ENCODE measurements at regions of chr11 and their contacts with region 1.

Region 1: DNA sequence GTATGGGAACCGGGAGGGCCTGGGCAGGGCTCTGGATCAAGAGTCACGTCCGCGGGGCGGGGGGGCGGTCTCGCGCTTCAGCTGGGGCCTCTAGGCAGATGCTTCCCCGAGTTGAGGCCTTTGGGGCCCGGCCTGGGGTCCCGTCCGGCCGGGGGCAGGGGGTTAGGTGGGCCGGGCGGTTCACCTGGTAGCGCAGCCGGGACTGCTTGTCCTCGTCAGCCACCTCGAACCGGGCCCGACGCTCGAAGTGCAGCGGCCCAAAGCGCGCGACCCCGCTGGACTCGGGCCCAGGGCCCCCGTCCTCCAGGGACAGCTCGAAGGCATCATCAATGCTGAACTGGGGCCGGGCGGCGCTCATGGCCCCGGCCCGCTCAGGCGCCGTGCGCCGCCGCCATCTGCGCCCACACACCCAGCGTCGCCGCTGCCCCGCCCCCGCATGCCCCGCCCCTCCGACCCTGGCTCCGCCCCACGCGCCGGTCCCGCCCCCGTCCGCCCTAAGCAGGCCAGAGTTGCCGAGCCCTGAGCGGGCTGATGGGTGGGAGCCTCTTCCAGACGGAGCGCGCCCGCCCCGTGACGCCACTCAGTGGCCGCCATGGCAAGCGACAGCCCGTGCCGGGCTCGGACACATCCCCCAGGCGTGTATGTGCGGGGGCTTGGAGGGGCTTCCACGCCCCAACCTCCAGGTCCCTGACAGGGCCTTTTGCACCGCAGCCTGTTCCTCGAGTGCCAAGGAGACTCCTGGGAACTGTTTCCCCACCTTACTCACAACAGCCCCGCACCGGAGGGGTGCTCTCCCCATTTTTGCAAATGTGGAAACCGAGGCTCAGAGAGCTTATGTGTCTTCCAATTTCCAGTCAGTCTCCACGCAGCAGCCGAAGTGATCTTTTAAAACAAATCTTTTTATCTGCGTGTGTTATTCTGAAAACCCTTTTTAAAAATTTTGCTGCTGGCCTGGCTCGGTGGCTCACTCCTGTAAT is at the start of gene TMEM134:
- DNase-seq: peak; percentile 85 to 88 (median 88)
- H3K4me3 ChIP-seq: peak within 1 kb of the TSS; percentile 78 to 79
- H3K4me3 Mint-ChIP-seq: peak within 1 kb of the TSS; percentile 83 to 92 (median 90)
- H3K27ac ChIP-seq: peak within 1 kb of the TSS; percentile 81
- H3K27ac Mint-ChIP-seq: peak within 1 kb of the TSS; percentile 84 to 96 (median 91)
- H3K4me1 ChIP-seq: peaks cover 46% of the 10 kb centered on the region
- H3K4me1 Mint-ChIP-seq: peaks cover 16 to 36% (median 27%) of the 10 kb centered on the region in 4 donors
- H3K27me3 ChIP-seq: no peaks in the 10 kb centered on the region
- H3K27me3 Mint-ChIP-seq: no peaks in the 10 kb centered on the region
- total RNA-seq, gene TMEM134: 90.1 to 99.1 TPM

Region 2: DNA sequence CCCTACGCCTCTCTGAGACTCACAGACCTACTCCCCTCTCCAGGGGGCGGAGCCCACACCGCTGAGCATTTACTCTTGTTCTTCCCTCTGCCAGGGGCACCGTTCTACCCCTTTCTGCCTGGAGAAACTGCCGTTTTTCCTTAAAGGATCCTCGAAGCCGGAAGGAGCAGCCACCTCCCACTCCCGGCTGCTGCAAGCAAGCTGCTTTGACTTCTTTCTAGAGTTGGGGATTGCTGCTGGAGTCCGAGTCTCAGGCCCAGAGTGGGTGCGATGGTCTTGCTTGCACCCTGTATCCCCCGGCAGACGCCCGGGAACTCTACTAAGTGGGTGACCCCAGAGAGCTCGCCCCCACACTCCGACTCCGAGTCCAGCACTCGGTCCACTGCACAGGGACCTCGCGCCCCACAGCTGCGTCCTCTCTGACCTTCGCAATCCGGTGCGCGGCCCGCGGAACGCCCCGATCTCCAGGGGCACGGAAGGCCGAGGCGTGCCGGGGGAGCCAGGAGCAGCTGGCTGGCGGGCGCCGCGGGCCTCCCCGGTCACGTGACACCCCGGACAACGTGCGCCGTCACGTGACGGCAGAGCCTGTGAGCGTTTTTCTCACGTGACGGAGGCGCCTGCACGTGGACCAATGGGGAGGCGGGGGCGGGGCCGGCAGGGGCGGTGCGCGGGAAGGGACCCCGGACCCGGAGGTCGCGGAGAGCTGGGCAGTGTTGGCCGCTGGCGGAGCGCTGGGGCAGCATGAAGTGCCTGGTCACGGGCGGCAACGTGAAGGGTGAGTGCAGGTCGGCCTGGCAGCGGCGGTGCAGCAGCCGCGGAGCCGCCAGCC is 77.6 kb before region 1 on chr11 and contains the start of gene RAD9A:
- CTCF ChIA-PET with region 1: interaction called, 3 read pairs
- POLR2A ChIA-PET with region 1: interaction called, 260 read pairs
- intact Hi-C with region 1: loop called (anchors 1 kb)
- DNase-seq: peak; percentile 86 to 93 (median 89)
- H3K4me3 ChIP-seq: peak within 1 kb of the TSS; percentile 63 to 75
- H3K4me3 Mint-ChIP-seq: peak within 1 kb of the TSS; percentile 87 to 93 (median 91)
- H3K27ac ChIP-seq: peak within 1 kb of the TSS; percentile 79
- H3K27ac Mint-ChIP-seq: peak within 1 kb of the TSS; percentile 82 to 94 (median 87)
- H3K4me1 ChIP-seq: peaks cover 17% of the 10 kb centered on the region
- H3K4me1 Mint-ChIP-seq: peaks cover 23 to 46% (median 36%) of the 10 kb centered on the region in 4 donors
- H3K27me3 ChIP-seq: no peaks in the 10 kb centered on the region
- H3K27me3 Mint-ChIP-seq: no peaks in the 10 kb centered on the region
- total RNA-seq, gene RAD9A: 51.8 to 55.9 TPM

Region 3: GRCh38 chr11:67409261-67409666 is 59.9 kb before region 1 on chr11:
- CTCF ChIA-PET with region 1: interaction called, 10 read pairs
- POLR2A ChIA-PET with region 1: interaction called, 260 read pairs
- intact Hi-C with region 1: loop called (anchors 1 kb)
- DNase-seq: peak; percentile 80 to 85 (median 83)
- H3K4me3 ChIP-seq: peak overlapping the region; percentile 48 to 77
- H3K4me3 Mint-ChIP-seq: peak overlapping the region; percentile 85 to 100 (median 94)
- H3K27ac ChIP-seq: peak overlapping the region; percentile 81
- H3K27ac Mint-ChIP-seq: peak overlapping the region; percentile 37 to 98 (median 72)
- H3K4me1 ChIP-seq: peaks cover 91% of the 10 kb centered on the region
- H3K4me1 Mint-ChIP-seq: peaks cover 49 to 97% (median 67%) of the 10 kb centered on the region in 4 donors
- H3K27me3 ChIP-seq: no peaks in the 10 kb centered on the region
- H3K27me3 Mint-ChIP-seq: no peaks in the 10 kb centered on the region

Region 4: DNA sequence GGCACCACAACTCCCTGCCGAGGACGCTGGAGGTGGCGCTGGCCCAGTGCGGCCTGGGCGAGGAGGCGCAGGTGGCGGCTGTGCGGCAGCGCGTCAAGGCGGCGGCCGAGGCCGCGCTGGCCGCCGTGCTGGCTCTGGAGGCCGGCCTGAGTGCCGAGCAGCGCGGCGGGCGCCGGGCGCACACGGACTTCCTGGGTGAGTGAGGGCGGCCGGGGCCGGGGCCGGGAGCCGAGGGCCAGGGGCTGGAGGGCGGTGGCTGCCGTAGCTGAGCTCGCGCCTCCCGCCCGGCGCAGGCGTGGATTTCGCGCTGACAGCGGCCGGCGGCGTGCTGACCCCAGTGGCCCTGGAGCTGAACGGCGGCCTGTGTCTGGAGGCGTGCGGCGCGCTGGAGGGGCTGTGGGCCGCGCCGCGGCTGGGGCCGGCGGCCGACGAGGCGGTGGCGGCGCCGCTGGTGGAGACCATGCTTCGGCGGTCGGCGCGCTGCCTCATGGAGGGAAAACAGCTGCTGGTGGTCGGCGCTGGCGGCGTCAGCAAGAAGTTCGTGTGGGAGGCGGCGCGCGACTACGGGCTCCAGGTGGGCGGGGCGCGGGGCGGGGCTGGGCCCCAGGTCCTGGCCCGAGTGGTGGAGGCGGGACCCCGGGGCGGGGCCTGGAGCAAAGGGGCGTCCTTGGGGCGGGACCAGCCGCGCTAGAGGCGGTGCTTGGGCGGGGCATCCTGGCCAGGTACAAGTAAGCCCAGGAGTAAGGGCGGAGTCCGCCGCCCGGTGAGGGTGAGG is 48.3 kb before region 1 on chr11:
- CTCF ChIA-PET with region 1: interaction called, 8 read pairs
- POLR2A ChIA-PET with region 1: interaction called, 50 read pairs
- intact Hi-C with region 1: loop called (anchors 2 kb)
- DNase-seq: peak; percentile 96 to 99 (median 97)
- H3K4me3 ChIP-seq: peak overlapping the region in 1 of 2 donors; percentile 69
- H3K4me3 Mint-ChIP-seq: peak overlapping the region; percentile 67 to 87 (median 80)
- H3K27ac ChIP-seq: peak overlapping the region; percentile 66
- H3K27ac Mint-ChIP-seq: peak overlapping the region; percentile 64 to 94 (median 92)
- H3K4me1 ChIP-seq: peaks cover 53% of the 10 kb centered on the region
- H3K4me1 Mint-ChIP-seq: peaks cover 29 to 63% (median 46%) of the 10 kb centered on the region in 4 donors
- H3K27me3 ChIP-seq: no peaks in the 10 kb centered on the region
- H3K27me3 Mint-ChIP-seq: no peaks in the 10 kb centered on the region

Region 5: DNA sequence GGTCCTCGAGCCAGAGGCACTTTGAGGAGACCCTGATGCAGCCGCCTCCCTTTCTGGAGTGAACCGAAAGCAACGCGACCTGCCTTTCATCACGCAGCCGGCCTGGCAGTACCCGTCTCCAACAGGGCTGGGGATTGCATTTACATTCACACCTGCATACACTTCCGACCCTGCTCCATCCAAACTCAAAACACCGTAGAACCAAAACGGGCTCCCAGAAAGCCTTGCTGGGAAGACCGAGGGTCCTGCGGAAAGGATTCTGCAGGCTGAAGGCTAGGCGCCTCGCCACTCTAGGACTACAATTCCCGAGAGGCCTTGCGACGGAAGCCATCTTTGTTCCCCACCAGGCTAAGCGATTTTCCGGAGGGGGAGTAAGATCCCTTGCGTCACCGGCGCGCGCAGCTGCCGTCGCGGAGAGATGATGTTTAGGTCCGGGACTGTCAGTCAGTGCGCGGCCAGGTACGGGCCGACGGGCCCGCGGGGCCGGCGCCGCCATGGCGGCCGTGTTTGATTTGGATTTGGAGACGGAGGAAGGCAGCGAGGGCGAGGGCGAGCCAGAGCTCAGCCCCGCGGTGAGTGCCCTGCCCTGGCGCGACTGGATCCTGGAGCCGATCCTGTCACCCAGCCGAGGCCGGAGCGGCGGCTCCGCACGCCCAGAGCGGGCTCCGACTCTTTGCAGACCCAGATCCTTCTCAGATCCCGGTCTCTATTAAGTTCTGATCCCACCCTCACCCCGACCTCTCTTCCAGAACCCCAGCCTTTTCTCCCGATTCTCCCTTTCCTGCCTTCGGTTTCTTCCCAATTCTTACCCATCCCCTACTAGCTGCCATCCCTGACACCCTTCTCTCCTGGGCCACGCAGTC is 40.8 kb before region 1 on chr11 and contains the start of gene RPS6KB2:
- CTCF ChIA-PET with region 1: interaction called, 3 read pairs
- POLR2A ChIA-PET with region 1: interaction called, 900 read pairs
- intact Hi-C with region 1: loop called (anchors 1 kb)
- DNase-seq: peak; percentile 97 to 99 (median 98)
- H3K4me3 ChIP-seq: peak within 1 kb of the TSS; percentile 94 to 95
- H3K4me3 Mint-ChIP-seq: peak within 1 kb of the TSS; percentile 93 to 100 (median 98)
- H3K27ac ChIP-seq: peak within 1 kb of the TSS; percentile 90
- H3K27ac Mint-ChIP-seq: peak within 1 kb of the TSS; percentile 95 to 99 (median 97)
- H3K4me1 ChIP-seq: peaks cover 49% of the 10 kb centered on the region
- H3K4me1 Mint-ChIP-seq: peaks cover 13 to 61% (median 31%) of the 10 kb centered on the region in 4 donors
- H3K27me3 ChIP-seq: no peaks in the 10 kb centered on the region
- H3K27me3 Mint-ChIP-seq: no peaks in the 10 kb centered on the region
- total RNA-seq, gene RPS6KB2: 78.1 to 79.9 TPM

Region 6: GRCh38 chr11:67439321-67439883 is 29.7 kb before region 1 on chr11:
- CTCF ChIA-PET with region 1: interaction called, 38 read pairs
- POLR2A ChIA-PET with region 1: interaction called, 900 read pairs
- intact Hi-C with region 1: loop called (anchors 1 kb)
- DNase-seq: peak in 1 of 5 donors; percentile 34
- H3K4me3 ChIP-seq: peak overlapping the region; percentile 29 to 81
- H3K4me3 Mint-ChIP-seq: peak overlapping the region; percentile 96 to 99 (median 97)
- H3K27ac ChIP-seq: peak overlapping the region; percentile 78
- H3K27ac Mint-ChIP-seq: peak overlapping the region; percentile 92 to 98 (median 96)
- H3K4me1 ChIP-seq: peaks cover 69% of the 10 kb centered on the region
- H3K4me1 Mint-ChIP-seq: peaks cover 35 to 81% (median 53%) of the 10 kb centered on the region in 4 donors
- H3K27me3 ChIP-seq: no peaks in the 10 kb centered on the region
- H3K27me3 Mint-ChIP-seq: no peaks in the 10 kb centered on the region

Region 7: GRCh38 chr11:67996622-67997474 is 527.7 kb after region 1 on chr11:
- CTCF ChIA-PET with region 1: no interaction called
- POLR2A ChIA-PET with region 1: no interaction called
- intact Hi-C with region 1: no loop called
- DNase-seq: peak in 1 of 5 donors; percentile 20
- H3K4me3 ChIP-seq: no peak overlapping the region
- H3K4me3 Mint-ChIP-seq: peak overlapping the region in 1 of 8 donors; percentile 10
- H3K27ac ChIP-seq: no peak overlapping the region
- H3K27ac Mint-ChIP-seq: peak overlapping the region in 4 of 7 donors; percentile 37 to 67 (median 56)
- H3K4me1 ChIP-seq: peaks cover 16% of the 10 kb centered on the region
- H3K4me1 Mint-ChIP-seq: peaks cover 17 to 38% (median 22%) of the 10 kb centered on the region in 4 donors
- H3K27me3 ChIP-seq: no peaks in the 10 kb centered on the region
- H3K27me3 Mint-ChIP-seq: no peaks in the 10 kb centered on the region